Mucosa of descending colon (tissue), 3 donors: ENCODE measurements at regions of chr17 and their contacts with region 1.

Region 1: GRCh38 chr17:29155227-29155965 is 24.8 kb downstream of the MYO18A start:
- DNase-seq: peak; percentile 72 to 78 (median 74)
- ATAC-seq: peak; percentile 90
- H3K4me3 ChIP-seq: no peak overlapping the region
- H3K4me1 ChIP-seq: peaks cover 54% of the 10 kb centered on the region
- CTCF ChIP-seq: no peak

Region 2: GRCh38 chr17:28684963-28685362 is 470.4 kb before region 1 on chr17:
- intact Hi-C with region 1: no loop called
- DNase-seq: peak in 1 of 3 donors; percentile 69
- ATAC-seq: peak; percentile 77
- H3K4me3 ChIP-seq: no peak overlapping the region
- H3K4me1 ChIP-seq: no peaks in the 10 kb centered on the region
- CTCF ChIP-seq: no peak

Region 3: GRCh38 chr17:29241015-29241963 is 85.9 kb after region 1 on chr17:
- intact Hi-C with region 1: no loop called
- DNase-seq: peak in 1 of 3 donors; percentile 21
- ATAC-seq: peak; percentile 68
- H3K4me3 ChIP-seq: no peak overlapping the region
- H3K4me1 ChIP-seq: no peaks in the 10 kb centered on the region
- CTCF ChIP-seq: no peak

Region 4: DNA sequence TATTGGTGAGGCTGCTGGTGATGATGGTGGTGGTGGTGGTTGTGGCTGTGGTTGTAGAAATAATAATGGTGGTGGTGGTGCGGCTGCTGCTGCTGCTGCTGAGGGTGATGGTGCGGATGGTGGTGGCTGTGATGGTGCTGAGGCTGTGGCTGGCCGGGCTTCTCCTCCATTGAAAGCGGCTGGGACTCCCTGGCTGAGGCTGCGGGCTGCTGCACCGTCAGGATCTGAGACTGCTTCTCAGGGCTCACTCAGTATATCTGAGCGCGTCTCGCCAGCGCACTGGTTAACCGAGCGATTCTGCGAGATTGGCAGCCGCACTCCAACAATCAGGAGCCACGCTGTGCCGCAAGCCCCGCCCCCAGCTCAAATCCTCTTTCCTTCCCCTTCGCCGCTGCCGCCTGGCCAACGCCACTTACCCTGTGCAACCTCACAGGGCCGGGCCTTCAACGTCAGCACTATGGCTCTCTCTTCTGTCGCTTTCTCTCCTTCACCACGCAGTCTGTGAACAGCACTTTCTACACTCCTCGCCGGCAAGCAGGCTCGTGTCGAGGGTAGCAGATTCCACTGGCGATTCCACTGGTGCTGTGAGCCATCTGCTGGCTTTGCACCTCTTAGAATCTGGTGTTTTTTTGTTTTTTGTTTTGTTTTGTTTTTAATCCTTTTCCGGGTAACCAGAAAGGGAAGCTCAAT is 138.6 kb after region 1 on chr17 and contains the start of gene NUFIP2:
- intact Hi-C with region 1: loop called in 1 of 2 experiments (anchors 10 kb)
- DNase-seq: peak; percentile 99
- ATAC-seq: peak; percentile 92
- H3K4me3 ChIP-seq: peak within 1 kb of the TSS; percentile 97
- H3K4me1 ChIP-seq: peaks cover 27% of the 10 kb centered on the region
- CTCF ChIP-seq: no peak
- total RNA-seq, gene NUFIP2: 45.3 to 47.5 (median 45.9) TPM